ENCODE measurements at regions of chr2 and their contacts with region 1.

Region 1: DNA sequence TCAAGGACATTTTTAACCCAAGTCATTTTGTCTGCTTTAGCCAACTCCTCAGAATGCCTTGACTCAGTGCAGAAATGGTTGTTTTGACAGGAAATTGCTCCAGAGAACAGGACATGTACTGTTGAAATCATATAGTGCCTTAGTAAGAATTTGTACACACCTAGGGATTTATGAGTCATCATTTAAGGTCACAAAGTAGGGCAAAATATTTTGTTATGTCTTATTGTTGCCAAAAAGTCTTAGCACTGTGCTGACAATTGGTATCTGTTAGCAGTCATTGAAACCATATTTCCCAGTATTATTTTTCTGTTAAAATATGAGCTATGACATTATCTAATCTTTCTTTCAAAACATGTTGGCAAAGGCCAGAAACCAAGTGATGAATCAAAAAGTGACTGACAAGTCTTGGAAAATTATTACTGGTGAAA is 104.5 kb downstream of the OSBPL6 start:
- DNase-seq: peak; percentile 93
- H3K4me3 ChIP-seq: no peak overlapping the region
- H3K27ac ChIP-seq: peak overlapping the region; percentile 37
- H3K4me1 ChIP-seq: peaks cover 29% of the 10 kb centered on the region
- H3K27me3 ChIP-seq: no peaks in the 10 kb centered on the region
- CTCF ChIP-seq: no peak
- POLR2A ChIP-seq: no peak

Region 2: GRCh38 chr2:178287652-178288344 is 11.0 kb before region 1 on chr2:
- CTCF ChIA-PET with region 1: interaction called, 7 read pairs
- POLR2A ChIA-PET with region 1: no interaction called
- dilution Hi-C with region 1: no loop called
- intact Hi-C with region 1: loop called (anchors 1 kb)
- DNase-seq: peak; percentile 67
- H3K4me3 ChIP-seq: no peak overlapping the region
- H3K27ac ChIP-seq: peak overlapping the region; percentile 58
- H3K4me1 ChIP-seq: peaks cover 17% of the 10 kb centered on the region
- H3K27me3 ChIP-seq: no peaks in the 10 kb centered on the region
- CTCF ChIP-seq: no peak
- POLR2A ChIP-seq: no peak

Measured in endothelial cell of umbilical vein (primary cell).